HEK293 (cell line): ENCODE measurements at regions of chr7 and their contacts with region 1.

Region 1: GRCh38 chr7:132049462-132050304 is 493.3 kb upstream of the PODXL start:
- H3K4me3 ChIP-seq: no peak overlapping the region
- H3K27ac ChIP-seq: no peak overlapping the region
- H3K4me1 ChIP-seq: no peaks in the 10 kb centered on the region
- CTCF ChIP-seq: no peak

Region 2: GRCh38 chr7:131745390-131746248 is 304.1 kb before region 1 on chr7:
- CTCF ChIA-PET with region 1: no interaction called
- POLR2A ChIA-PET with region 1: no interaction called
- H3K4me3 ChIP-seq: no peak overlapping the region
- H3K27ac ChIP-seq: no peak overlapping the region
- H3K4me1 ChIP-seq: no peaks in the 10 kb centered on the region
- CTCF ChIP-seq: no peak

Region 3: DNA sequence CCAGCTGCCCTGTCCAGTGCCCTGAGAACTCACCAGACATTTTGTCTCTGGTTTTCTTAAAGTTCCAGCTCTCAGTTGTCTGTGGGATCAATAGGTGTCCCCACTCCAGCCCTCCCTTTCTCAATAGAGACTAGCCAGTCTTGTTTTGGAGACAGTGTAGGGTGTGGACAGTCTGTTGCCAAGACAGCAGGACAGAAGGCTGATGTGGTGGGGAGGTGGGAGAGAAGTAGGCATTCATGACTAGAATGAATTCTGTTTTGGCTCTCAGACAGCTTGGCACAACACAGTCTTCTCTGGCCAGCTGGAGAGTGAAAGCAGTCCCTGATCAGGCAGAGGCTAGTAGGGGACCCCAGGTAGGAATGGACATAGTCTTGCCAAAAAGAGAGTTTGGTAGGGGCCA is 26.2 kb before region 1 on chr7:
- CTCF ChIA-PET with region 1: no interaction called
- POLR2A ChIA-PET with region 1: no interaction called
- H3K4me3 ChIP-seq: no peak overlapping the region
- H3K27ac ChIP-seq: no peak overlapping the region
- H3K4me1 ChIP-seq: no peaks in the 10 kb centered on the region; the same call in 1 of the 2 replicates
- CTCF ChIP-seq: no peak

Region 4: DNA sequence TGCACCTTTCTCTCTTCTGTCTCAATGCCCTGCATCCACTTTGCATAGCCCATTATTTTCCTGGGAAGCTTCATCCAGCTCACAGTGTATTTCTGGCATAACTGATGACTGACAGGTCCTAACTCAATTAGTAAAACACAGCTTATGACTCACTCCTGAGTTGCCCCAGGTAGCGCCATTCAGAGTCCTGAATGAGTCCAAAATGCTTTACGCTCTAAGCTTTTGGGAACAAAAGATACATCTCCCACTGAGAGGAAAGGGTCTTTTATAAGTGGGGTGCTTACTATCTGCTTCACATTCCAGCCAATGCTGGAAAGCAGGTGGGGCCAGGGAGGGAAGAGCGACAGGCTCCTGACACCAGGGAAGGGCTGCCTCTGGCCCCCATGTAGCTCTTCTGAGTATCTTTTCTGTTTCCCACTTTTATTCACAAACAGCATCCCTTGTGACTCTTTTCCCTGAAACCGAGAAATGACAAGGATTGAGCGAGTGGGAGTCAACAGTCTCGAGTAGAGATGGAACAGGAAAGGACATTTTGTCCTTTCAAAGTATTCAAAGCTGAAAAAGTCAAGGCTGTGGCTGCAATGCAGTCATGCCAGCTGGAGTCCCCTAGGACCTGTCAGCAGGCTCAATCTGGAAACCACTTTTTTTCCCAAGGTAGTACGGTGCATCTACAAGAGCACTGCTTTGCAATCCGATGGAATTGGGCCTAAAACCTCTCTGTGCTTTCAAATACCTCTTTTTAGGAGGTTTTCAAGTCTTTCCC is 13.9 kb before region 1 on chr7:
- CTCF ChIA-PET with region 1: interaction called, 12 read pairs
- POLR2A ChIA-PET with region 1: no interaction called
- H3K4me3 ChIP-seq: no peak overlapping the region
- H3K27ac ChIP-seq: no peak overlapping the region
- H3K4me1 ChIP-seq: no peaks in the 10 kb centered on the region
- CTCF ChIP-seq: no peak